Activated naive CD4-positive, alpha-beta T cell treated with anti-CD3 and anti-CD28 coated beads for 36 hours (primary cell): ENCODE measurements at regions of chr4 and their contacts with region 1.

Region 1: DNA sequence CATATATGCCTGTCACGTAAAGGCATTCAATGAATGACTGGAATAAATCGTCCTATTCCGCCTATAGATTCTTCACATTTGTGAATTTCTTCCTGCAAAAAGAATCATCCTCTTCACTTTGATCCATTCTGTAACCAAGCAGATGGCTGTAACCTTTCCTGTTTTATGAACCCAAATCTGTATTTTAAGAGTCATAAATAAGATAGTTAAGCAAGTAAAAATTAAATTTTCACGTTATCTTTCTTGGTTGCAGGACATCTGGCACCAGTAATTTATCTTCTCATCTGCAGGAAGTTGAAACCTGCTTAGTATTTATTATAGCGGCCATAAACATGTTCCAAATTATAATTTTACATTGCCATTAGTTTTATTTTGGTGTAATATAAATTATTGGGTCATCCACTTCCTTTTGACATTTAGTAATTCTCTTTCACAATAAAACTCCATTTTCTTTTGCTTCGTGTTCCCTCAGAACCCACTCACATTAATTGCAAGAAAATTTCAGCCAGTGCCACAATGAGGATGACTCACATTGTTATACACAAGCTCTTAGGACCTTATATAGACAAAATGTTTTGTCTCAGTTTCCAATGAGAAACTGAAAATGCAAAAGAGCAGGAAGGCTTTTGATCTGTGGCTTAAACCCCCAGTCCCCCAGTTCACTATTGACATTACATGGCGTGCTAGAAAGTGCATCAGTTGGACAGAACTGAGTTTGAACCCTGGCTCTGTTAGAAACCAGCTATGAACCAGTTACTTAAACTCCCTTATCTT is 51.1 kb downstream of the TMEM156 start:
- DNase-seq: peak; percentile 51
- H3K4me3 Mint-ChIP-seq: no peak overlapping the region
- H3K27ac Mint-ChIP-seq: peak overlapping the region; percentile 87
- H3K4me1 Mint-ChIP-seq: peaks cover 62% of the 10 kb centered on the region
- H3K27me3 Mint-ChIP-seq: no peaks in the 10 kb centered on the region

Region 2: GRCh38 chr4:38939165-38939564 is 41.9 kb before region 1 on chr4:
- CTCF ChIA-PET with region 1: interaction called, 4 read pairs
- intact Hi-C with region 1: loop called (anchors 1 kb)
- DNase-seq: no peak
- H3K4me3 Mint-ChIP-seq: no peak overlapping the region
- H3K27ac Mint-ChIP-seq: peak overlapping the region; percentile 27
- H3K4me1 Mint-ChIP-seq: peaks cover 31% of the 10 kb centered on the region
- H3K27me3 Mint-ChIP-seq: no peaks in the 10 kb centered on the region

Region 3: DNA sequence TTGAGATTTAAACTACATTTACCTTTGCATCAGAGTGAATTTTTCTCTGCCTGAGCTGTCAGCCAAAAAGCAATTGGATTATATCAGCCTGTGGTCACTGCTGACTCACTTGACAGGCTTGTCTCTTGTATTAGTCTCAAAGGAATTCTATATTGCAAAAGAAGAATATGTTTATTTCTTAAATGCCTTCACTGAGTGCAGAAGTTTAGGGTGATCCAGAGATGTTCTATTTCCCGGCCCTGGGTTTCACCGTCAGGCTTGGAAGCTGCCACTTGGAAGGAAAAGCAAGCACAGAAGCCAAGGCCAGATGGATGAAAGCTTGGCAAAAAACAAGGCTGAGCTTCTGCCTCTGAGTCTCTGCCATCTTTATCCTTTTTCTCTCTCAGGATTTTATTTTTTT is 32.5 kb before region 1 on chr4:
- CTCF ChIA-PET with region 1: no interaction called
- intact Hi-C with region 1: loop called (anchors 1 kb)
- DNase-seq: no peak
- H3K4me3 Mint-ChIP-seq: no peak overlapping the region
- H3K27ac Mint-ChIP-seq: no peak overlapping the region
- H3K4me1 Mint-ChIP-seq: peaks cover 26% of the 10 kb centered on the region
- H3K27me3 Mint-ChIP-seq: no peaks in the 10 kb centered on the region

Region 4: DNA sequence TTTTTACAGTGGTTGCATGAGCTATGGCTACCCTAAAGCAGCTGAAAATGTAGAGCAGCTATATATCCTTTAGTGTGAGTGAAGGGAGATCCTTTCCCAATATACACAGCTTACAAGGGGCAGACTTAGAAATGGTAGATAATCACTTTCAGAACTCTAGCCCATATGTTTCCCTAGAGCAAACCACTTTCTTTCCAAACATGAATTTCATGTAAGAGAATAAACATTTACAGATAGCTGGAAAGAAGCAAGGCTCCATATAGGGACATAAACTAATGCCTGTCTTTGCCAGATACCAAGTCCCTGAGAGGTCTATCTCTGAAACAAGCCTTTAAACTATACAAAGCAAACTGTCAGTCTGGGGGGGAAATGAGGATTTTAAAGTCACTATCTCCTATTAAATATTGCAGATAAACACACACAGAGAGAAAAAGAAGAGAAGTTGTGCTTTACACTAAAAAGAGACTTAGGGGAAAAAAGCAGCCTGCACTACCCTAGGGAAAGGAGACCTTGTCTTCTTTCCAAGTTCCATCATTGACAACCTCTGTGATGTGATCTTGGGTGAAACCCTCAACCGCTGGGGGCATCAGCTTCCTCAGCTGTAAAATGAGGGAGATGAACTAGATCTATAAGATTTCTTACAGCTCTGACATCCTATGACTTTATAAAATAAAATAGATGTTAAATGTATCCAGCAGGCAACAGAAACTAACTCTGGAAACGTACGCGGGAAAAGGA is 22.5 kb before region 1 on chr4:
- CTCF ChIA-PET with region 1: interaction called, 3 read pairs
- intact Hi-C with region 1: loop called (anchors 1 kb)
- DNase-seq: no peak
- H3K4me3 Mint-ChIP-seq: no peak overlapping the region
- H3K27ac Mint-ChIP-seq: peak overlapping the region; percentile 73
- H3K4me1 Mint-ChIP-seq: peaks cover 26% of the 10 kb centered on the region
- H3K27me3 Mint-ChIP-seq: no peaks in the 10 kb centered on the region

Region 5: GRCh38 chr4:39044364-39044955 is 63.4 kb after region 1 on chr4:
- CTCF ChIA-PET with region 1: interaction called, 5 read pairs
- intact Hi-C with region 1: loop called (anchors 1 kb)
- DNase-seq: peak; percentile 99
- H3K4me3 Mint-ChIP-seq: peak overlapping the region; percentile 83
- H3K27ac Mint-ChIP-seq: peak overlapping the region; percentile 92
- H3K4me1 Mint-ChIP-seq: peaks cover 51% of the 10 kb centered on the region
- H3K27me3 Mint-ChIP-seq: no peaks in the 10 kb centered on the region

Region 6: DNA sequence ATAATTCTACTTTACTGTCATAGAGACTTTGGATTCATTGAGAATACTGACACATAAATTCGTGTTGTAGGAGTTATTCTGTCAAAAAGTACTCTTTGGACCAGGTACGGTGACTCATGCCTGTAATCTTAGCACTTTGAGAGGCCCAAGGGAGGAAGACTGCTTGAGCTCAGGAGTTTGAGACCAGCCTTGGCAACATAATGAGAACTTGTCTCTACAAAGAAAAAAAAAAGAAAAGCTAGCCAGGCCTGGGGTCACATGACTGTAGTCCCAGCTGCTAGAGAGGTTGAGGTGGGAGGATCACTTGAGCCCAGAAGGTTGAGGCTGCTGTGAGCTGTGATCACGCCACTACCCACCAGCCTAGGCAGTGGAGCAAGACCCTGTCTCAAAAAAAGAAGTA is 256.1 kb after region 1 on chr4:
- CTCF ChIA-PET with region 1: no interaction called
- intact Hi-C with region 1: no loop called
- DNase-seq: no peak
- H3K4me3 Mint-ChIP-seq: no peak overlapping the region
- H3K27ac Mint-ChIP-seq: no peak overlapping the region
- H3K4me1 Mint-ChIP-seq: no peaks in the 10 kb centered on the region
- H3K27me3 Mint-ChIP-seq: no peaks in the 10 kb centered on the region